Activated T-helper 1 cell treated with anti-CD3 and anti-CD28 coated beads, Interleukin-12 subunit alpha, Interleukin-12 subunit beta, Interleukin-2, Interleukin-4 antibody, amounts not matched to agents 30 ng/mL and 10 ng/mL and 1 ng/mL, durations not matched to agents 14 hours and 24 hours and 36 hours (primary cell): ENCODE measurements at regions of chr5 and their contacts with region 1.

Region 1: GRCh38 chr5:56050551-56051255 is 55.9 kb upstream of the IL6ST start:
- DNase-seq: no peak
- H3K4me3 Mint-ChIP-seq: peak overlapping the region; percentile 40
- H3K27ac Mint-ChIP-seq: peak overlapping the region; percentile 54
- H3K4me1 Mint-ChIP-seq: peaks cover 32% of the 10 kb centered on the region
- H3K27me3 Mint-ChIP-seq: peaks cover 6% of the 10 kb centered on the region

Region 2: DNA sequence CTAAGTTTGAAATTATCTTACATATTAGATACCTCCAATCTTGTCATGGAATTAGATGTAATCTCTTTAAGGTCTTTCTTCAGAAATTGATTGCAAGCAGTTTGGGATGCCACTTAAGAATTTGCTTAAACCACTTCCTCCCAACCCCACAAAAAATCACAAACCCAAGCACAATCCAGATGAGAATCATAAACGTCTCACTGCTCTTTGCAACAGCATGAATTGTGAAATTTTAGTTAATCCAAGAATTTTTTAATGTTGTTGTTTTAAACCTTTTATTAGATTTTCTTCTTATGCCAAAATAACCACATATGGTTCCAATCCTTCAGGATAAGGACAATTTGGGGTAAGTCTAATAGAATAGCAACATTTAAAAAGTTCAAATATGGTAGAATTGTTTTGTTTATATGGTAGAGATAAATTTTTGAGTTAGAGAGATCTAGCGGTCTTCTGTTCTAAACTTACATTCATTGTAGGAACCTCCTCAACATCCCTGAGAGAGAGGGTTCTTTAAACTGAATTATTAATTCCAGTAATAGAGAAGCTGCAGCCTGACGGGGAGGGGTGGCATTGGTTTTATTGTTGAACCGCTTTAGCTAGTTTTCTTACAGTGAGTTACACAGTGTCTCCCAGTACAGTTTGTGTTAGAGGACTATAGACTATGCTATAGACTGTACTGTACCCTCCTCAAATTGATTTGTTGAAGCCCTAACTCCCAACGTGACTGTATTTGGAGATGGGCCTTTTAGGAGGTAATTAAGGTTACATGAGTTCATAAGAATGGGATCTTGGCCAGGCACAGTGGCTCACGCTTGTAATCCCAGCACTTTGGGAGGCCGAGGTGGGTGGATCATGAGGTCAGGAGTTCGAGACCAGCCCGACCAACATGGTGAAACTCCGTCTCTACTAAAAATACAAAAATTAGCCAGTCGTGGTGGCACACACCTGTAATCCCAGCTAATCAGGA is 31.1 kb before region 1 on chr5:
- intact Hi-C with region 1: loop called (anchors 1 kb)
- DNase-seq: no peak
- H3K4me3 Mint-ChIP-seq: peak overlapping the region; percentile 4
- H3K27ac Mint-ChIP-seq: peak overlapping the region; percentile 62
- H3K4me1 Mint-ChIP-seq: peaks cover 22% of the 10 kb centered on the region
- H3K27me3 Mint-ChIP-seq: peaks cover 19% of the 10 kb centered on the region

Region 3: GRCh38 chr5:56026863-56027300 is 23.8 kb before region 1 on chr5:
- intact Hi-C with region 1: loop called (anchors 1 kb)
- DNase-seq: no peak
- H3K4me3 Mint-ChIP-seq: no peak overlapping the region
- H3K27ac Mint-ChIP-seq: no peak overlapping the region
- H3K4me1 Mint-ChIP-seq: peaks cover 23% of the 10 kb centered on the region
- H3K27me3 Mint-ChIP-seq: peaks cover 32% of the 10 kb centered on the region

Region 4: GRCh38 chr5:56064984-56065383 is 14.3 kb after region 1 on chr5:
- intact Hi-C with region 1: loop called (anchors 2 kb)
- DNase-seq: no peak
- H3K4me3 Mint-ChIP-seq: no peak overlapping the region
- H3K27ac Mint-ChIP-seq: no peak overlapping the region
- H3K4me1 Mint-ChIP-seq: peaks cover 40% of the 10 kb centered on the region
- H3K27me3 Mint-ChIP-seq: peaks cover 5% of the 10 kb centered on the region

Region 5: DNA sequence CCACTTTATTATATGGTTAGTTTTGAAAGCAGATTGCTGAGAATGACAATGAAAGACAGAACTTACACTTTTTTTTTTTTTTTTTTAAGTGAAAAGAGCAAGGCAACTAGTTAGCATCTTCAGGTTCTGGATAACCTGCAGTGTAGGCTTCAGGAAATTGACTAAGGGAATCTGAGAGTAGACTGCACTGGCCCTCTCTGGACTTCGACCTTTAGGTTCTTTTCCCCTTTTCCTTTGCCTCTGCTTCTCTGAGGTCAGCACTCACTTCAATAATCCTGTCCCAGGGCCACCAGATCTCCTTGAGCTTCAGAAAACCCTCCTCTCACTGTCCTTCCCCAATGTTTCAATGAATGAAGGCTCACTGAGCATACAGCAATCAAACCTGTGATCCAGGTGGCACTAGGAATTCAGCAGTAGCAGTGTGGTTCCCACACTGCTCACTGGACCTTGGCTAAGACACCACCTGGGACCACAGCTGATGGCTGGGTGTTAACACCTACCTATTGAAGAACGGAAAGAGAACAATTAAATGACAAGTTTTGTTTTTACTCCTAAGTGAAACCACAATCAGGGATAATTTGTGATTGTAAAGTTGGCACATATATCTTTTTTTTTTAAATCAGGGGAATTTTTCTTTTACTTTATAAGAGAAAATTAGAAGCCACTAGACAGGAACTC is 29.8 kb after region 1 on chr5:
- intact Hi-C with region 1: loop called (anchors 1 kb)
- DNase-seq: no peak
- H3K4me3 Mint-ChIP-seq: peak overlapping the region; percentile 38
- H3K27ac Mint-ChIP-seq: peak overlapping the region; percentile 37
- H3K4me1 Mint-ChIP-seq: peaks cover 45% of the 10 kb centered on the region
- H3K27me3 Mint-ChIP-seq: no peaks in the 10 kb centered on the region